ENCODE measurements at regions of chr4 and their contacts with region 1.

Region 1: DNA sequence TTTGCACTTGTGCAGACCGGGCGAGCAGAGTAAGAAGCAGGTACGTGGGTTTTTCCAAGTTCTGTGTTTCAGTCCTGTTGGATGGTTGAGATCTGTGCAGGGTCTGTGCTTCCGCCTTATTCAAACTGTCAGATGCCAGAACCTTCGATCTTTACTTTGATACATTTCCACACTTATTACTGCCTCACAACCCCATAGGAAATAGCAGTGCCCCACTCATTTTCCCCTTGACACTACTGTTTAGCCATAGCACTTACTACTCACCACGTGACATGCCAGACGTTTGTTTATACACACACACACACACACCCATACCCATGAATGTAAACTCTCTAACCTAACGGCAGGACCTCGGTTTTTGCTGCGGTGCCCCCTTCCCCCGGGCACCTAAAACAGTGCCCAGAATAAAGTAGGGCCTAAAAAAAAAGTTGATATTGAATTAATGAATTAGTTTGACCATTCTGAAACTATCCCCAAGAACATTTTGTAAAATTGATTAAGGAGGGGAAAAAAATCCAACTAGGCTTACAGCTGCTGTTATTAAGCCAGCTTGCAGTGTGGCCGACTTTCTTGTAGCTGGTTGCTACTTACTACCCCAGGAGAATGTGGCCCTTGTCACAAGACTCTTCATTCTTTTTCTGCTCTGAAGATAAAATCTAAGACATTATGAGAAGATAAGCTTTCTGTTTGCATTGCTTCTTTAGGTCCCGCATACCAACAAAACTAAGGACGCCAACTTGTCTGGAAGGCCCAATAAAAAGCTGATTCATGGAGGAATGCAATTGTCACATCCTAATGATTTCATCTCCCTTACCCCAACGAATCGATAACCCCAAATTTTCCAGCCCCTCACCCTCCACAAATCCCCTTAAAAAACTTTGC is 706 bp upstream of the SEPSECS start:
- DNase-seq: peak in 1 of 3 donors; percentile 36
- H3K4me3 ChIP-seq: peak overlapping the region; percentile 76 to 97 (median 86)
- H3K27ac ChIP-seq: peak overlapping the region; percentile 93 to 96
- H3K4me1 ChIP-seq: peaks cover 17 to 29% (median 23%) of the 10 kb centered on the region in 4 experiments
- H3K27me3 ChIP-seq: no peaks in the 10 kb centered on the region

Region 2: GRCh38 chr4:25113915-25114904 is 46.7 kb before region 1 on chr4:
- CTCF ChIA-PET with region 1: no interaction called
- POLR2A ChIA-PET with region 1: no interaction called
- DNase-seq: no peak
- H3K4me3 ChIP-seq: no peak overlapping the region
- H3K27ac ChIP-seq: no peak overlapping the region
- H3K4me1 ChIP-seq: no peaks in the 10 kb centered on the region
- H3K27me3 ChIP-seq: peaks cover 0 to 3% (median 0%) of the 10 kb centered on the region in 5 experiments

Region 3: GRCh38 chr4:25180524-25181131 is 19.7 kb after region 1 on chr4:
- CTCF ChIA-PET with region 1: interaction called, 11 read pairs
- POLR2A ChIA-PET with region 1: no interaction called
- DNase-seq: peak; percentile 86 to 94 (median 94)
- H3K4me3 ChIP-seq: no peak overlapping the region
- H3K27ac ChIP-seq: no peak overlapping the region
- H3K4me1 ChIP-seq: no peaks in the 10 kb centered on the region
- H3K27me3 ChIP-seq: no peaks in the 10 kb centered on the region

Region 4: GRCh38 chr4:25198713-25199112 is 37.8 kb after region 1 on chr4:
- CTCF ChIA-PET with region 1: no interaction called
- POLR2A ChIA-PET with region 1: no interaction called
- DNase-seq: no peak
- H3K4me3 ChIP-seq: no peak overlapping the region
- H3K27ac ChIP-seq: no peak overlapping the region
- H3K4me1 ChIP-seq: no peaks in the 10 kb centered on the region
- H3K27me3 ChIP-seq: no peaks in the 10 kb centered on the region